Colonic mucosa (tissue), 4 donors: ENCODE measurements at regions of chr5 and their contacts with region 1.

Region 1: GRCh38 chr5:10689391-10690081 is 71.5 kb downstream of the DAP start:
- DNase-seq: no peak
- H3K4me3 ChIP-seq: no peak overlapping the region
- H3K27ac ChIP-seq: no peak overlapping the region
- H3K4me1 ChIP-seq: no peaks in the 10 kb centered on the region
- H3K27me3 ChIP-seq: no peaks in the 10 kb centered on the region
- CTCF ChIP-seq: no peak

Region 2: DNA sequence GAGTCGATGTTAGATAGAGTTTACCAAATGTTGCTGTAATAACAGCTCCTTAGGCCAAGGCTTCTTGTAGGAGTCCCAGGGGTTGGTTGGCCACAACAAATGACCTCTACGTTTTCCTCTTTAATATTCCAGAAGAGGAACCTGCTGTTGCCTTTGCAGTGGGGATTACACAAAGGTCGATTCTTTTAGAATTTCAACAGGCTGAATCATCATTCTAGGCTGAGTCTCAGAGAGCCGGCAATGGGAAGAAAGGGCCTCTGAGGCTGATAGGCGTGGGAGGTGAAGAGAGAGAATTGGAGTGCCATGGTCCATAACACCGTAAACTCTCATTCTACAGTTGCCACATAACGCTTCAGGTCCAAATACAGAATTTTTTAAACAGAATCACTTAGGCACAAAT is 477.4 kb after region 1 on chr5:
- intact Hi-C with region 1: loop called (anchors 10 kb)
- DNase-seq: no peak
- H3K4me3 ChIP-seq: no peak overlapping the region
- H3K27ac ChIP-seq: no peak overlapping the region
- H3K4me1 ChIP-seq: no peaks in the 10 kb centered on the region
- H3K27me3 ChIP-seq: no peaks in the 10 kb centered on the region
- CTCF ChIP-seq: no peak